HEK293T (cell line): ENCODE measurements at regions of chr14 and their contacts with region 1.

Region 1: GRCh38 chr14:45134051-45134958 is at the start of gene FKBP3:
- DNase-seq: peak; percentile 97

Region 2: GRCh38 chr14:44961604-44962333 is 172.5 kb before region 1 on chr14 and contains the starts of genes KLHL28 and TOGARAM1:
- CTCF ChIA-PET with region 1: no interaction called
- POLR2A ChIA-PET with region 1: interaction called, 32 read pairs
- DNase-seq: peak; percentile 91

Region 3: GRCh38 chr14:45083971-45084722 is 50.2 kb before region 1 on chr14 and contains the start of gene PRPF39:
- CTCF ChIA-PET with region 1: no interaction called
- POLR2A ChIA-PET with region 1: interaction called, 18 read pairs
- DNase-seq: peak; percentile 98

Region 4: DNA sequence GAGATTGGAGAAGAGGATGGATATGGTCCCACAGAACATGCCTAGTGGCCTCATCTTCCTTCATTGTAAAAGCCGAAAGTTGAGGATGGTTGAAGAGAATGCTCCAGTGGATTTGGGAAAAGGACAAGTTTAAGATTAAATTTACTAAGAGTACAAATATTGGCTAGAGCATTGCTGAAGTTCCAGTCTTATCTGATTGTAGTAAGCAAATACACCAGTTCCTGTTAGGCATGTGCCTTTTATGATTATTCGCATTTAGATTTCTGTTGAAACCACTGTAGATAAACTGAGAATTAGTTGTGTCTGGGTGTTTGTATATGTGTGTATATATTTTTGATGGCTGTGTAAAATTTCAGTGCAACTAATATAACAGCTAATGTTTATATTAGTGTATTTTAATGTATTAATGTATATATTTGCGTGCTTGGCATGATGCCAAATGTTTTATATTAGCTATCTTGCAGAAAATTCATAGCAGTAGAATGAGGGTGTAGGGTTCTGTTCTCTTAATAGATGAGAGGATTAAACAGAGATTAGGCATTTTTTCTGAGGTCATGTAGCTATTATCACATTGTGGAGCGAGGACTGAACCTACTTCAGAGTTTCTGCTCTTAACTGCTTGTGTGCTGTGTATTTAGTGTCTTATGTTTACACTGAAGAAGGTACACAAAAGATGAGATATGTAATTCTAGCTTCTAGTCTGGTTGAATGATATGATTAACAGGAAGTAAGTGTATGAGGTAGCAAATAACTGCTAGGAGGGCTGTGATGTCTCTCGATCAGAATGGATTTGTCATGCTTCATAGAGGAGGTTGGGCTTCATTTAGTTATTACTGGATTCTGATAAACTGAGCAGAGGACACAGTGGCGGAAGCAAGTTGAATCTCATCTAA is 21.2 kb before region 1 on chr14:
- CTCF ChIA-PET with region 1: no interaction called
- POLR2A ChIA-PET with region 1: interaction called, 11 read pairs
- DNase-seq: no peak

Region 5: GRCh38 chr14:45198551-45198950 is 64.2 kb after region 1 on chr14:
- CTCF ChIA-PET with region 1: no interaction called
- POLR2A ChIA-PET with region 1: no interaction called
- DNase-seq: no peak